ENCODE measurements at regions of chr20 and their contacts with region 1.

Region 1: GRCh38 chr20:32110173-32110704 is 725 bp downstream of the TM9SF4 start:
- DNase-seq: no peak
- ATAC-seq: no peak
- H3K4me3 ChIP-seq: peak overlapping the region; percentile 77
- H3K27ac ChIP-seq: peak overlapping the region; percentile 99
- H3K4me1 ChIP-seq: peaks cover 4% of the 10 kb centered on the region
- H3K27me3 ChIP-seq: no peaks in the 10 kb centered on the region
- CTCF ChIP-seq: no peak
- POLR2A ChIP-seq: no peak
- RAD21 ChIP-seq: no peak

Region 2: GRCh38 chr20:32031007-32031958 is 79.0 kb before region 1 on chr20:
- CTCF ChIA-PET with region 1: no interaction called
- POLR2A ChIA-PET with region 1: no interaction called
- dilution Hi-C with region 1: no loop called
- in situ Hi-C with region 1: no loop called
- intact Hi-C with region 1: no loop called
- DNase-seq: peak; percentile 73
- ATAC-seq: peak; percentile 98
- H3K4me3 ChIP-seq: no peak overlapping the region
- H3K27ac ChIP-seq: no peak overlapping the region
- H3K4me1 ChIP-seq: no peaks in the 10 kb centered on the region
- H3K27me3 ChIP-seq: peaks cover 75% of the 10 kb centered on the region
- CTCF ChIP-seq: peak; percentile 73
- POLR2A ChIP-seq: no peak
- RAD21 ChIP-seq: peak; percentile 71

Region 3: DNA sequence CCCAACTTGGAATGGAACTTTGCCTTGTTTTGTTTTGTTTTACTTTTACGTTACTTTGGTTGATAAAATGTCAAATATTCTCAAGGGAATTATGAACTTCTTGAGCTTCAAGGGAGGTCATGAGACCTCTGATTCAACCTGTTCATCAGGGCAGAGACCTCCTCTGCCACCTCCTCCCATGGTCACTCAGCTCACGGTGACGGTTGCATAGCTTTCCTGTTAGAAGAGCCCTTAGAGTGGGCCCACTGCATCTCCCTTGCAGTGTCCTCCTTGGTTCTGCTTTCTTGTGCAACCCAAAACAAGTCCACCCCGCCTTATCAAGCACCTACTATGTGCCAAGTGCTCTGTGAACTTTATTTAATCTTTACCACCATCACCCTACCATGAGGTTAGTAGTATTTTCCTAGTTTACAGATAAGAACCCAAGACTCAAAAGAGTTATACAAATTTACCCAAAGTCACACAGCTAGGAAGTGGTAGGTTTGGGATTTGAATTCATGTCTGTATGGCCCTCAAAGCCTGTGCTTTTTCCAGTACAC is 14.7 kb after region 1 on chr20:
- CTCF ChIA-PET with region 1: no interaction called
- POLR2A ChIA-PET with region 1: interaction called, 18 read pairs
- dilution Hi-C with region 1: no loop called
- in situ Hi-C with region 1: no loop called
- intact Hi-C with region 1: no loop called
- DNase-seq: no peak
- ATAC-seq: no peak
- H3K4me3 ChIP-seq: no peak overlapping the region
- H3K27ac ChIP-seq: no peak overlapping the region
- H3K4me1 ChIP-seq: no peaks in the 10 kb centered on the region
- H3K27me3 ChIP-seq: no peaks in the 10 kb centered on the region
- CTCF ChIP-seq: no peak
- POLR2A ChIP-seq: no peak
- RAD21 ChIP-seq: no peak

Region 4: DNA sequence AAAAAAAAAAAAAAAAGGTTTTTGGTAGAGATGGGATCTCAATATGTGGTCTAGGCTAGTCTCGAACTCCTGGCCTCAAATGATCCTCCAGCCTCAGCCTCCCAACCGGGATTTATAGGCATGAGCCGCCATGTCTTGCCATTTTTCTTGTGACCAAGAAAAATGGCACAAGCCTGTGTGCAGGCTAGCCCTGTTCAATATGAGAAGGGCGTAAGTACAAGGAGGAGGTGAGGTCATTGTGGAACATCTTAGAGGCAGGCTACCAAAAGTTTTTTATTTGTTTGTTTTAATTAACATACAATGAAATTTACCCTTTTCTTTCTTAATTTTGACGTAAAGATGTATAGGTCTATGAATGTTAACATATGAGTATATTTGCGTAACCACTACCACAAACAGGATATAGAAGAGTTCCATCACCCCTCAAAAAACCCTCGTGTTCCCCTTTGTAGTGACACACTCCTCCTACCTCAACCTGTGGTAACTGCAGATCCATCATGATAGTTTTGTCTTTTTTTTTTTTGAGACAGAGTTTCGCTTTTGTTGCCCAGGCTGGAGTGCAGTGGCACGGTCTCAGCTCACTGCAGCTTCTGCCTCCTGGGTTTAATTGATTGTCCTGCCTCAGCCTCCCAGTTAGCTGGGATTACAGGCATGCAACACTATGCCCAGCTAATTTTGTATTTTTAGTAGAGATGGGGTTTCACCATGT is 138.9 kb after region 1 on chr20:
- CTCF ChIA-PET with region 1: no interaction called
- POLR2A ChIA-PET with region 1: no interaction called
- dilution Hi-C with region 1: no loop called
- in situ Hi-C with region 1: no loop called
- intact Hi-C with region 1: no loop called
- DNase-seq: no peak
- ATAC-seq: no peak
- H3K4me3 ChIP-seq: no peak overlapping the region
- H3K27ac ChIP-seq: no peak overlapping the region
- H3K4me1 ChIP-seq: peaks cover 3% of the 10 kb centered on the region; the same call in 1 of the 2 replicates
- H3K27me3 ChIP-seq: peaks cover 3% of the 10 kb centered on the region; the same call in 1 of the 2 replicates
- CTCF ChIP-seq: no peak
- POLR2A ChIP-seq: no peak
- RAD21 ChIP-seq: no peak